CD4-positive, alpha-beta T cell (primary cell): ENCODE measurements at regions of chr2 and their contacts with region 1.

Region 1: GRCh38 chr2:197425550-197425949 is 9.3 kb downstream of the SF3B1 start:
- DNase-seq: no peak
- ATAC-seq: no peak
- H3K4me3 ChIP-seq: no peak overlapping the region
- H3K4me3 Mint-ChIP-seq: peak overlapping the region; percentile 39
- H3K27ac ChIP-seq: no peak overlapping the region
- H3K27ac Mint-ChIP-seq: peak overlapping the region; percentile 45
- H3K4me1 ChIP-seq: peaks cover 57% of the 10 kb centered on the region
- H3K4me1 Mint-ChIP-seq: peaks cover 73% of the 10 kb centered on the region
- H3K27me3 ChIP-seq: no peaks in the 10 kb centered on the region
- H3K27me3 Mint-ChIP-seq: no peaks in the 10 kb centered on the region
- CTCF ChIP-seq: no peak

Region 2: DNA sequence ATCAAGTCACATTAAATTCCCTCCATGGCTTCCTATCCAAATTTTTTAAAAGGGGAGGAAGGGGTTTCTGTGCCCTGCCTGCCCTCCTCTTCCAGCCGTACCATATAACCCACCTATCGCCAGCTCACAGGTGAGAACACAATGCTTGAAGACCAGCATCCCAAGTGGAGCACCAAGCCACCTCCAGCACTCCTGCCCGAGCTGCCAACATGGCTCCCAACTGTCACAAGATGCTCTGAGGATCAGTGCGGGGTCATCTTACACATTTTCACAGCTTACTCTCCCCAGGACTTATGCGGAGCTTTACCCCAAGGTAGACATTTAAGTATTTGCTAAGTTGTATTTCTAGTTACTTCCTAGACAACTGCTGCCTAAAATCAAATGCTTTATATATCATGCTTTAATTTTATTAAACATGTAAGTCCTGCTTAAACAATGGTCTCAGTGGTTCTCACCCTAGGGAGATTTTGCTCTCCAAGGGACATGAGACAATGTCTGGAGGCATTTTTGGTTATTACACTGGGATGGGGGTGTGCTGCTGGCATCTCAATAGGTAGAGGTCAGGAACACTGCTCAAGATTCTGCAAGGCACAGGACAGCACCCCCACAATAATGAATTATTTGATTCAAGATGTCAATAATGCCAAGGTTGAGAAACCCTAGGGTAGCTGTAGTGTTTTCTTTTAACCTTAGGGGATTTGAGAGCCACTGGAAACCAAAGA is 36.5 kb before region 1 on chr2:
- CTCF ChIA-PET with region 1: no interaction called
- POLR2A ChIA-PET with region 1: no interaction called
- intact Hi-C with region 1: loop called in 1 of 2 experiments (anchors 5 kb)
- DNase-seq: no peak
- ATAC-seq: no peak
- H3K4me3 ChIP-seq: no peak overlapping the region
- H3K4me3 Mint-ChIP-seq: no peak overlapping the region
- H3K27ac ChIP-seq: no peak overlapping the region
- H3K27ac Mint-ChIP-seq: peak overlapping the region; percentile 10
- H3K4me1 ChIP-seq: no peaks in the 10 kb centered on the region
- H3K4me1 Mint-ChIP-seq: peaks cover 6% of the 10 kb centered on the region
- H3K27me3 ChIP-seq: no peaks in the 10 kb centered on the region
- H3K27me3 Mint-ChIP-seq: no peaks in the 10 kb centered on the region
- CTCF ChIP-seq: no peak

Region 3: GRCh38 chr2:197453161-197453914 is 27.8 kb after region 1 on chr2 and contains the start of gene COQ10B:
- CTCF ChIA-PET with region 1: no interaction called
- POLR2A ChIA-PET with region 1: interaction called, 260 read pairs
- intact Hi-C with region 1: no loop called
- DNase-seq: peak; percentile 94 to 100 (median 97)
- ATAC-seq: peak; percentile 85
- H3K4me3 ChIP-seq: peak within 1 kb of the TSS; percentile 67
- H3K4me3 Mint-ChIP-seq: peak within 1 kb of the TSS; percentile 99
- H3K27ac ChIP-seq: peak within 1 kb of the TSS; percentile 98 to 100
- H3K27ac Mint-ChIP-seq: peak within 1 kb of the TSS; percentile 100
- H3K4me1 ChIP-seq: peaks cover 29% of the 10 kb centered on the region
- H3K4me1 Mint-ChIP-seq: peaks cover 52% of the 10 kb centered on the region
- H3K27me3 ChIP-seq: no peaks in the 10 kb centered on the region
- H3K27me3 Mint-ChIP-seq: no peaks in the 10 kb centered on the region
- CTCF ChIP-seq: peak; percentile 47
- total RNA-seq, gene COQ10B: 53.4 to 55.3 TPM

Region 4: GRCh38 chr2:197461057-197461456 is 35.5 kb after region 1 on chr2:
- CTCF ChIA-PET with region 1: no interaction called
- POLR2A ChIA-PET with region 1: no interaction called
- intact Hi-C with region 1: loop called (anchors 5 kb)
- DNase-seq: no peak
- ATAC-seq: no peak
- H3K4me3 ChIP-seq: no peak overlapping the region
- H3K4me3 Mint-ChIP-seq: no peak overlapping the region
- H3K27ac ChIP-seq: no peak overlapping the region
- H3K27ac Mint-ChIP-seq: no peak overlapping the region
- H3K4me1 ChIP-seq: peaks cover 9% of the 10 kb centered on the region
- H3K4me1 Mint-ChIP-seq: peaks cover 43% of the 10 kb centered on the region
- H3K27me3 ChIP-seq: no peaks in the 10 kb centered on the region
- H3K27me3 Mint-ChIP-seq: no peaks in the 10 kb centered on the region
- CTCF ChIP-seq: no peak

Region 5: DNA sequence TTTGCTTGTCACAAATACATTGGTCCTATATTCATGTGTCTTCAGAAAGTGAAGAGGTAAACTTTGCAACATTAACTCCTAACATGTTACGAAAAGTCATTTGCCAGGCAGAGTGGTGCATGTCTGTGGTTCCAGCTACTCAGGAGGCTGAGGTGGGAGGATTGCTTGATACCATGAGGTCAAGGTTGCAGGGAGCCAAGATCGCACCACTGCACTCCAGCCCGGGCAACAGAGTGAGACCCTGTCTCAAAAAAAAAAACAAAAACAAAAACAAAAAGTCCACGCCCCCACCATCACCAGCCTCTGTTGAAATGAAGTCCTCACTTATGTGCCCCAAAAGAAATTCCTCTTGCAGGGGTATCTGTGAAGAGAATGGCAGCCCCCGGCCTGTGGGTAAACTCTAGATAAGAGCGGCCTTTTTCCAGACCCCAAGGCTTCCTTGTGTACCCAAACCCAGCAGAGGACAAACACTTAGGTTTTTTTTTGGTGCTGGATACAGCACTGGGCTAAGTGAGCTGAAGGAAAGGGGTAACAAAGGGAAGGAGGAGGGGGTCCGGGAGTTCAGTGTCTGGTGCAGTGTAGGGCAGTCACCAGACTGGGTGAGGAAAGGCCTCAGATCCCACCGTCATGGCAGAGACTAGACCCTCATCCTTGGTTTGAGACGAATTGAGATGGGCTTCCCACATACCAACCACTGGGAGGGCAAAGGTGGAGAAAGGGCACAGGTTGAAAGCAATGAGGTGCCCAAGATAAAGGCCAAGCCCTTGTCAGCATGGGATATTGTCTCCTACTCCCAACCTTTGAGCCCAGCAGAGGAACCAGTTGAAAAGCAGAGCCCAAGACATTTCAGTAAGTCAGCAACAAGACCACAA is 54.9 kb after region 1 on chr2:
- CTCF ChIA-PET with region 1: no interaction called
- POLR2A ChIA-PET with region 1: no interaction called
- intact Hi-C with region 1: no loop called
- DNase-seq: no peak
- ATAC-seq: no peak
- H3K4me3 ChIP-seq: no peak overlapping the region
- H3K4me3 Mint-ChIP-seq: no peak overlapping the region
- H3K27ac ChIP-seq: no peak overlapping the region
- H3K27ac Mint-ChIP-seq: no peak overlapping the region
- H3K4me1 ChIP-seq: no peaks in the 10 kb centered on the region
- H3K4me1 Mint-ChIP-seq: no peaks in the 10 kb centered on the region
- H3K27me3 ChIP-seq: no peaks in the 10 kb centered on the region
- H3K27me3 Mint-ChIP-seq: no peaks in the 10 kb centered on the region
- CTCF ChIP-seq: no peak